H1 (cell line): ENCODE measurements at regions of chr17 and their contacts with region 1.

Region 1: DNA sequence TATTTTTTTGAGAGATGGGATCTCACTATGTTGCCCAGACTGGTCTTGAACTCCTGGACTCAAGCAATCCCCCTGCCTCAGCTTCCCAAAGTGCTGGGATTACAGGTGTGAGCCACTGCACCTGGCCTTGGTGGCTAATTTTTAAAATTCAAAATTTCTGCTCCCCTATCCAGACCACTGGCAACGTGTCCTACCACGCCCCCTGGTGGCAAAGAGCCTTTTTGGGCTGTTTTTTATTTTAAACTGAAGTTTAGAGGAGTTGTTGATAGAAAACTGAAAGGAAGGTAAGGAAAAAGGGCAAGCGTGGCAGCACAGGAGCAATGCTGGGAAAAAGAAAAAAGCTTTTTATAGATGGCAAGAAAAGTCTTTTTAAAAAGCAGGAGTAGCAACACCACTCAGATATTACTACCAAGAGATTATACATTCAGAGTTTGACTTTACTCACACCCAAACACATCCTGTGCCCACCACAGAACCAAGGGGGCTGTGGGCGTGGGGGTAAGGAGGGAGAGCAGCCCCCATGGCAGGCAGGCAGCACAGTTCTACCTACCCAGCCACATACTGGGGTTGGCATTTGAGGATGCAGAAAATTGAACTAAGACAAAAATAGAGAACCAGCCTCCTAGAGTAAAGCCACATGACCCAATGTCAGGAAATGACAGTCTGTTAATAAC is 4.2 kb upstream of the MXRA7 start:
- DNase-seq: peak in 1 of 2 experiments; percentile 92
- H3K4me3 ChIP-seq: no peak overlapping the region
- H3K27ac ChIP-seq: no peak overlapping the region
- H3K4me1 ChIP-seq: peaks cover 2 to 7% (median 5%) of the 10 kb centered on the region in 4 experiments; a peak in 5 of 7 replicates
- H3K27me3 ChIP-seq: peaks cover 0 to 3% (median 2%) of the 10 kb centered on the region in 4 experiments; a peak in 5 of 7 replicates
- CTCF ChIP-seq: peak; percentile 53 to 80 (median 70)
- EP300 ChIP-seq: no peak
- POLR2A ChIP-seq: no peak
- RAD21 ChIP-seq: peak; percentile 55 to 69

Region 2: GRCh38 chr17:76700617-76701470 is 14.1 kb before region 1 on chr17:
- CTCF ChIA-PET with region 1: interaction called, 43 read pairs
- POLR2A ChIA-PET with region 1: interaction called, 7 read pairs
- DNase-seq: no peak
- H3K4me3 ChIP-seq: no peak overlapping the region
- H3K27ac ChIP-seq: no peak overlapping the region
- H3K4me1 ChIP-seq: peaks cover 0 to 29% (median 23%) of the 10 kb centered on the region in 4 experiments; a peak in 6 of 7 replicates
- H3K27me3 ChIP-seq: no peaks in the 10 kb centered on the region; a peak in 1 of 7 replicates
- CTCF ChIP-seq: no peak
- EP300 ChIP-seq: no peak
- POLR2A ChIP-seq: no peak
- RAD21 ChIP-seq: no peak

Region 3: DNA sequence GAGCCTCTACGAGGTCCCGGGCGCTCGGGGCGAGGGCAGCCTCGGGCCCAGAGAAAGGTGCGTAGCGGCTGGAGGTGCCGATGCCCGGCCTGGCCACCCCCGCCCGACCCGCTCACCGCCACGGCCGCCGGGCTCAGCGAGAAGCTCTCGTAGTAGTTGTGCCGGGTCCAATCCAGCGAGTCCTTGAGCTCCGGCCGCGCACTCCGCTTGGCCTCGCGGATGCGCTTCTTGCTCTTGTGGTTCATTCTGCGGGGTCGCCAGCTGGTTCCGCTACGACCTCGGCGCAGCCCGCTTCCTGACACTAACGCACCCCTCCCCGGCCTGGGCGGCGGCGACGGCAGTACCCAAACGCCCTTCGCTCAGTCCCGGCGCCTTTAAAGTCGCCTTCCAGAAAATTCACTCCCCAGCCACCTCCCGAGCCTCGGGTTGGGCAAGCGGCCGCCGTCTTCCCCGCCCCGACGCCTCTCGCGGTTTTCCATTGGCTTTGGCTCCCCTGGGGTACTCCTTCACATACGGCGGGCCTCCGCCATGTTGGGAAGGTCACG is 11.3 kb after region 1 on chr17 and contains the start of gene JMJD6:
- CTCF ChIA-PET with region 1: interaction called, 13 read pairs
- POLR2A ChIA-PET with region 1: interaction called, 15 read pairs
- DNase-seq: peak; percentile 87 to 90
- H3K4me3 ChIP-seq: peak within 1 kb of the TSS; percentile 83 to 99 (median 84)
- H3K27ac ChIP-seq: peak within 1 kb of the TSS; percentile 97
- H3K4me1 ChIP-seq: peaks cover 0 to 9% (median 2%) of the 10 kb centered on the region in 4 experiments; a peak in 5 of 7 replicates
- H3K27me3 ChIP-seq: no peaks in the 10 kb centered on the region; a peak in 2 of 7 replicates
- CTCF ChIP-seq: no peak
- EP300 ChIP-seq: no peak
- POLR2A ChIP-seq: peak in 1 of 2 experiments; percentile 43; a peak in 2 of 3 replicates
- RAD21 ChIP-seq: no peak
- total RNA-seq, gene JMJD6: 18.6 and 22.2 TPM in 2 replicates

Region 4: GRCh38 chr17:76824093-76824492 is 109.1 kb after region 1 on chr17:
- CTCF ChIA-PET with region 1: no interaction called
- POLR2A ChIA-PET with region 1: no interaction called
- DNase-seq: no peak
- H3K4me3 ChIP-seq: no peak overlapping the region
- H3K27ac ChIP-seq: no peak overlapping the region
- H3K4me1 ChIP-seq: no peaks in the 10 kb centered on the region; a peak in 2 of 7 replicates
- H3K27me3 ChIP-seq: no peaks in the 10 kb centered on the region; a peak in 1 of 7 replicates
- CTCF ChIP-seq: no peak
- EP300 ChIP-seq: no peak
- POLR2A ChIP-seq: no peak
- RAD21 ChIP-seq: no peak